Stomach (tissue), 19 donors: ENCODE measurements at regions of chr17 and their contacts with region 1.

Region 1: DNA sequence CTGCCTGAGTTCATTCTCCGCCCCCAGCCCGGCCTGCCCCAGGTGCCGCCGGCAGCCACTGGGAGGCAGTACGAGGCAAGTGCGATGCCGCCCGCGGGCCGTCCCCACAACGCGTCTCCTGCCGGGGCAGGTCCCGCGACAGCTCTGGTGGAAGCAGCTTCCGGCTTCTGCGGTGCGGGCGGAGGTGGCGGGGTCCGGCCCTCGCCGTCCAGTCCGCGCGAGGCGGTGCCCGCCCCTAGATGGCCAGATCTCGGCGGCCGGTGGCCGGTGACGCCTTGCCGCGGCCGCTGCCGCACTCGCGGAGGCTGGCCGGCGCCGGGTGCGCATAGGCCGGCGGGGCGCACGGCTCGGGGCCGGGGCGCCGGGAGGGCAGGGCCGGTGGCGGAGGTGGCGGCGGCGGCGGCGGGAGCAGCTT is 1.8 kb downstream of the GJD3 start:
- DNase-seq: peak; percentile 76 to 93
- H3K4me3 ChIP-seq: peak overlapping the region; percentile 54 to 79 (median 62)
- H3K27ac ChIP-seq: peak overlapping the region in 3 of 5 donors; percentile 35 to 50 (median 46)
- H3K4me1 ChIP-seq: peaks cover 9 to 43% (median 31%) of the 10 kb centered on the region in 4 donors
- H3K27me3 ChIP-seq: peaks cover 0 to 28% (median 0%) of the 10 kb centered on the region in 3 donors
- CTCF ChIP-seq: peak in 4 of 7 experiments; percentile 17 to 62 (median 42)
- EP300 ChIP-seq: no peak
- POLR2A ChIP-seq: no peak

Region 2: DNA sequence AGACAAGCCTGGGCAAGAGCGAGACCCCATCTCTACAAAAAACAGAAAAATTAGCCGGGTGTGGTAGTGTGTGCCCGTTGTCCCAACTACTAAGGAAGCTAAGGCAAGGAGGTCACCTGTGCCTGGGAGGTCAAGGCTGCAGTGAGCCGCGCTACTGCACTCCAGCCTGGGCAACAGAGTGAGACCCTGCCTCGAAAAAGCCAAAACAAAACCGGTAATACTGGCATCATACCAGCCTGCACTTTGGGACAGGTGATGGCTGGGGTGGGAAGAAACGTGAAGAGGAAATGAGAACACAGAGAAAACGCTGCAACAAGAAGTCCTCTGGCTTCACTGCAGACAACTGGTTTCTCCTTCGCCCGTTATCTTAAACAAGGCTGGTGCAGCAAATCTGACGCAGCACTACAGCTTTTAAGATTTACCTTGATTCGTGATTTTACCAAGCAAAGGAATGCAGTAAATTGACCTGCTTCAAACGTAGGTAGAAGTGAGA is 223.1 kb before region 1 on chr17:
- intact Hi-C with region 1: no loop called
- DNase-seq: no peak
- H3K4me3 ChIP-seq: peak overlapping the region; percentile 55 to 87 (median 74)
- H3K27ac ChIP-seq: peak overlapping the region; percentile 97 to 99 (median 99)
- H3K4me1 ChIP-seq: peaks cover 20 to 66% (median 33%) of the 10 kb centered on the region in 4 donors
- H3K27me3 ChIP-seq: no peaks in the 10 kb centered on the region
- CTCF ChIP-seq: no peak
- EP300 ChIP-seq: no peak
- POLR2A ChIP-seq: no peak

Region 3: GRCh38 chr17:40268141-40268712 is 94.5 kb before region 1 on chr17:
- intact Hi-C with region 1: no loop called
- DNase-seq: peak in 1 of 2 donors; percentile 28
- H3K4me3 ChIP-seq: no peak overlapping the region
- H3K27ac ChIP-seq: no peak overlapping the region
- H3K4me1 ChIP-seq: no peaks in the 10 kb centered on the region
- H3K27me3 ChIP-seq: no peaks in the 10 kb centered on the region
- CTCF ChIP-seq: no peak
- EP300 ChIP-seq: no peak
- POLR2A ChIP-seq: no peak

Region 4: DNA sequence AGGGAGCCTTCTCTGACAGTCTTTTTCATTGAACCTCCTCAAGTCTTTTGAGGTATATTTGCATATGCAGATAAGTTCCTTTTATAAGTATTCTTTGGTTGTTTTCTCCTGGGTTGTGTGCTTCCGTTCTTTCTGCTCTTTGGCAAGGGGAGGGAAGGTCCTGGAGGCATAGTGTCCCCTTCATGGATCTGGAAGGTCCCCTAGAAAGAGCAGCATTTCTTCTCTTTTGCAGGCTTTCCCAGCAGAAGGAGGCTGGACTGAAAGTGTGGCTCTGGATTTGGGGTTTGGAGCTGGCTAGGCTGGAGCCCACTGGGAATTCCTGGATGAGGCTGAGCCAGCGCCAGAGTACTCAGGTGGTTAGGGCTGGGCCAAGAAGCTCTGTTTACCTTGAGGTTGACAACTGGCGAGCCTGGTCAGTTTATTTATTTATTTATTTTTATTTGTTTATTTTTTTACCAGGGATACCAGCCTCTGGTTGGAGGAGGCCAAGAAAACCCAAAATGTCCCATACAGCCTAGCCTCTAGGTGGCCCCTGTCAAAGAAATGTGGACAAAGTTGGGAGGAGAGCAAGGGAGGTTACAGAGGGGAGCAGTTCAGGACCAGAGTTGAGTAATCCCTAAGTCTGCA is 60.4 kb after region 1 on chr17:
- intact Hi-C with region 1: no loop called
- DNase-seq: no peak
- H3K4me3 ChIP-seq: no peak overlapping the region
- H3K27ac ChIP-seq: no peak overlapping the region
- H3K4me1 ChIP-seq: peaks cover 0 to 20% (median 7%) of the 10 kb centered on the region in 4 donors
- H3K27me3 ChIP-seq: no peaks in the 10 kb centered on the region
- CTCF ChIP-seq: no peak
- EP300 ChIP-seq: no peak
- POLR2A ChIP-seq: no peak

Region 5: GRCh38 chr17:40433551-40434415 is 71.1 kb after region 1 on chr17:
- intact Hi-C with region 1: loop called (anchors 10 kb)
- DNase-seq: peak in 1 of 2 donors; percentile 42
- H3K4me3 ChIP-seq: no peak overlapping the region
- H3K27ac ChIP-seq: peak overlapping the region in 4 of 5 donors; percentile 23 to 81 (median 56)
- H3K4me1 ChIP-seq: peaks cover 0 to 31% (median 15%) of the 10 kb centered on the region in 4 donors
- H3K27me3 ChIP-seq: no peaks in the 10 kb centered on the region
- CTCF ChIP-seq: peak in 2 of 7 experiments; percentile 23 to 38
- EP300 ChIP-seq: no peak
- POLR2A ChIP-seq: no peak